H1 (cell line): ENCODE measurements at regions of chr2 and their contacts with region 1.

Region 1: GRCh38 chr2:235595422-235596010 is 101.7 kb downstream of the AGAP1 start:
- DNase-seq: peak; percentile 50 to 85
- H3K4me3 ChIP-seq: no peak overlapping the region
- H3K27ac ChIP-seq: no peak overlapping the region
- H3K4me1 ChIP-seq: peaks cover 0 to 4% (median 0%) of the 10 kb centered on the region in 4 experiments; a peak in 1 of 7 replicates
- H3K27me3 ChIP-seq: no peaks in the 10 kb centered on the region
- CTCF ChIP-seq: peak; percentile 77 to 92 (median 83)
- EP300 ChIP-seq: no peak
- POLR2A ChIP-seq: no peak
- RAD21 ChIP-seq: peak; percentile 82 to 84

Region 2: GRCh38 chr2:235077046-235077445 is 518.5 kb before region 1 on chr2:
- CTCF ChIA-PET with region 1: no interaction called
- POLR2A ChIA-PET with region 1: no interaction called
- DNase-seq: no peak
- H3K4me3 ChIP-seq: no peak overlapping the region
- H3K27ac ChIP-seq: no peak overlapping the region
- H3K4me1 ChIP-seq: peaks cover 0 to 6% (median 2%) of the 10 kb centered on the region in 4 experiments; a peak in 2 of 7 replicates
- H3K27me3 ChIP-seq: no peaks in the 10 kb centered on the region
- CTCF ChIP-seq: no peak
- EP300 ChIP-seq: no peak
- POLR2A ChIP-seq: no peak
- RAD21 ChIP-seq: no peak

Region 3: GRCh38 chr2:235135990-235136561 is 459.4 kb before region 1 on chr2:
- CTCF ChIA-PET with region 1: interaction called, 46 read pairs
- POLR2A ChIA-PET with region 1: no interaction called
- DNase-seq: peak; percentile 34 to 85
- H3K4me3 ChIP-seq: no peak overlapping the region
- H3K27ac ChIP-seq: no peak overlapping the region
- H3K4me1 ChIP-seq: no peaks in the 10 kb centered on the region; a peak in 2 of 7 replicates
- H3K27me3 ChIP-seq: peaks cover 0 to 11% (median 8%) of the 10 kb centered on the region in 4 experiments; a peak in 6 of 7 replicates
- CTCF ChIP-seq: peak; percentile 69 to 91 (median 84)
- EP300 ChIP-seq: no peak
- POLR2A ChIP-seq: no peak
- RAD21 ChIP-seq: peak; percentile 86 to 88

Region 4: DNA sequence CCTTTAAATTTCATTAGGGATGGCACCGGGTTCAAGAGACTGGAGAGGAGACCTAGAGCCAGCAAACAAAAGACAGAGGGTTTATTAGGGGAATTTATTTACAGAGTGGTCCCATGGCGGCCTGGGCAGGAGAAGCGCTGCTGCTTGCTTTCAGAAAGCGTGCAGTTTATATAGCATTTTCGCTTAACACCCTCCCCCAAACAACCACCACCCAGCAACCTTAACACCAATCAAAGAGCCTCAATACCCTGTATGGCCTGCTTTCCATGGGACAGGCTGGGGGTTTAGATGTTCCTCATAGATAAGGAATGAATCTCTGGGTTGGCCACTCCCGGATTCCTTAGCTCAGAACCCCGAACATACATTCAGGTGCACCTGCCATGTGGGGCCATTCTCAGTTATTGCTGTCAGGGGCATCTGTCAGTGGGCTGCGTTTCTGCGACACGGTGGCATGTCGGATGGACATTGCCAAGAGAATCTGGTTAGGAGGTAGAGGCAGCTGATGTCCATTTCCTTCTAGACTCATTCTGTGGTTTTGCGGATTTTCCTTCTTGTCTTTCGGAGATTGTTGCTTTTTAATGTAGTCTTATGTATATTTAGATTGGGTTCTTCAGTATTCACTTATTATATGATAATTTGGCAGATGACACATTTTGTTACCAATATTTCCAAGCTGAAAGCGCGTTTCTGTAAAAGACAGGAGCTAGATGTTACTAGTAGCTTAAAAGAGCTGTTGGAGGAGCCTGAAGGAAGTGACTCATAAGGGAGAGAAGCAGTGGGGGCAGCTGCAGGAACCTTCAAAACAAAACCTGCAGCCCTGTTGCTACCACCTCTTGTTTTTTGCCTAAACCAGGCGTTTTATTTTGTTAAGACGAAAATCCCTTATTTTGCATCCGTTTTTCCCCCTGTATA is 94.5 kb before region 1 on chr2:
- CTCF ChIA-PET with region 1: interaction called, 23 read pairs
- POLR2A ChIA-PET with region 1: no interaction called
- DNase-seq: no peak
- H3K4me3 ChIP-seq: peak overlapping the region in 1 of 4 experiments; percentile 17; a peak in 1 of 8 replicates
- H3K27ac ChIP-seq: no peak overlapping the region
- H3K4me1 ChIP-seq: peaks cover 25 to 51% (median 38%) of the 10 kb centered on the region in 4 experiments
- H3K27me3 ChIP-seq: no peaks in the 10 kb centered on the region
- CTCF ChIP-seq: no peak
- EP300 ChIP-seq: no peak
- POLR2A ChIP-seq: no peak
- RAD21 ChIP-seq: no peak

Region 5: DNA sequence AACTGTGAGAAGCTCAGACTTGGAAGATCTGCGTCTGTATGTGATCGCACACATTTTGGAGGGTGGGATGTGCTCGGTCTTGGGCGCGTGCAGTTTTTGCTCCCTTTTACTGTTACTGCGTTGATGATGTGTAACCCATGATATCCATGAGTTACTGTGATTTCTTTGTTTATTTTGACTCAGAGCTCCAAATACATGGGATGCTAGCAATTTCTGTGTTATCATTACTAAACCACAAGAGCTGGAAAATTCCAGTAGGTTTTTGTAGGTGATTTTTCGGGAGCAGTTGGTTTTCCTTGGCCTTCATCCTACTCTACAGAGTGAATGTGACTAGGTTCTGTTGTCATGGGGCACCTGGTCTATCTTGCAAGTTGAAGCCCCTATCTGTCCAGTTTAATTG is 22.5 kb after region 1 on chr2:
- CTCF ChIA-PET with region 1: interaction called, 10 read pairs
- POLR2A ChIA-PET with region 1: no interaction called
- DNase-seq: no peak
- H3K4me3 ChIP-seq: no peak overlapping the region
- H3K27ac ChIP-seq: no peak overlapping the region
- H3K4me1 ChIP-seq: peaks cover 0 to 4% (median under 1%) of the 10 kb centered on the region in 4 experiments; a peak in 4 of 7 replicates
- H3K27me3 ChIP-seq: no peaks in the 10 kb centered on the region
- CTCF ChIP-seq: no peak
- EP300 ChIP-seq: no peak
- POLR2A ChIP-seq: no peak
- RAD21 ChIP-seq: no peak

Region 6: DNA sequence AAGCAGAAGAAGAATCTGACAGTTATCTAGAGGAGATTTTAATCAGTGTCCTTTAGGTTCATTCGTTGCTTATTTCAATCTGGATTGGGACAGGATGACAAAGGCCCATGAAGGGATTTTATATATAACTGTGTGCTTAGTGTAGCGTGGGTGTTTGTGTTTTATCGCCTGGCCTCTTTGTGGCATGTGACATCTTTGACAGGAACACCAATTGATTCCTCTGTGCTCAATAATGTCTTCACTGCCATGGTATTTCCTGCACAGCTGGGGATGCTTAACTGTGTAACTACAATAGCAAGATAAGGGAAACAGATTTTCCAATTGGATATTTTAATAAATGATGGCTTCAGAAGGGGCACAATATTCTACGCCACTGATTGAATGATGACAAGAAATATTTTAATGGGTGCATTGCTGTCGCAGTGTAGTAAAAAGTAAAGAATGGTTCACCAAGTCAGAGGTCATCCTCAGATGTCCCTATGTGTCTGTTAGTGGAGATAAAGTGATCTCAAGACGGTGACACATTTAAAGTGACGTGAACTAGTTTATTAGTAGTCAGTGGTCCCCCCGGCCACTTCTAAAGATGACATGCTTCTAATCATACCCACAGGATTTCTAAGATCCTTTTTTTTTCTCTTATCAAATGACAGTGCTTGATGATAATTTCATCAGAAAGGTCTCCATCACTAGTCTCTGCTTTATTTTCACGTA is 58.7 kb after region 1 on chr2:
- CTCF ChIA-PET with region 1: interaction called, 11 read pairs
- POLR2A ChIA-PET with region 1: no interaction called
- DNase-seq: no peak
- H3K4me3 ChIP-seq: no peak overlapping the region
- H3K27ac ChIP-seq: no peak overlapping the region
- H3K4me1 ChIP-seq: peaks cover 5 to 15% (median 9%) of the 10 kb centered on the region in 4 experiments
- H3K27me3 ChIP-seq: no peaks in the 10 kb centered on the region
- CTCF ChIP-seq: no peak
- EP300 ChIP-seq: no peak
- POLR2A ChIP-seq: no peak
- RAD21 ChIP-seq: no peak

Region 7: DNA sequence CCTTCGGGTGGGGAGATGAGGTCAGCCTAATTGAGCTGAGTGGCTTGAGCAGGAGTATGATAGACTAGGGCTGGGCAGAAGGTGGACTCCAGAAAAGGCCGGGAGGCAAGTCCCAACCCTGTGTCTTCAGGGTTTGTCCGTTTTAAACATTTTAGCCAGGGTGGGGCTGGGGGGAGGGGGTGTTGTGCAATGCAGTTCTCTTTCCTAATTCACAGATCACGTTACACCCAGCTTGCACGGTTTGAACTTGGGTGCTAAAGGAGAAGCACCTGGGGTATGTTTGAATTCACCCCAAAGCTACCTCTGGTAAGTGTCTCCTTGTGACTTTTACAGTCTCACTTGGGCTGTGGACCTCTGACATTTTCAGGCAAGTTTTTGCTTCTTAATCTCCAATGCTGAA is 131.7 kb after region 1 on chr2:
- CTCF ChIA-PET with region 1: interaction called, 11 read pairs
- POLR2A ChIA-PET with region 1: no interaction called
- DNase-seq: no peak
- H3K4me3 ChIP-seq: no peak overlapping the region
- H3K27ac ChIP-seq: no peak overlapping the region
- H3K4me1 ChIP-seq: peaks cover 0 to 2% (median under 1%) of the 10 kb centered on the region in 4 experiments; a peak in 3 of 7 replicates
- H3K27me3 ChIP-seq: no peaks in the 10 kb centered on the region
- CTCF ChIP-seq: no peak
- EP300 ChIP-seq: no peak
- POLR2A ChIP-seq: no peak
- RAD21 ChIP-seq: no peak

Region 8: DNA sequence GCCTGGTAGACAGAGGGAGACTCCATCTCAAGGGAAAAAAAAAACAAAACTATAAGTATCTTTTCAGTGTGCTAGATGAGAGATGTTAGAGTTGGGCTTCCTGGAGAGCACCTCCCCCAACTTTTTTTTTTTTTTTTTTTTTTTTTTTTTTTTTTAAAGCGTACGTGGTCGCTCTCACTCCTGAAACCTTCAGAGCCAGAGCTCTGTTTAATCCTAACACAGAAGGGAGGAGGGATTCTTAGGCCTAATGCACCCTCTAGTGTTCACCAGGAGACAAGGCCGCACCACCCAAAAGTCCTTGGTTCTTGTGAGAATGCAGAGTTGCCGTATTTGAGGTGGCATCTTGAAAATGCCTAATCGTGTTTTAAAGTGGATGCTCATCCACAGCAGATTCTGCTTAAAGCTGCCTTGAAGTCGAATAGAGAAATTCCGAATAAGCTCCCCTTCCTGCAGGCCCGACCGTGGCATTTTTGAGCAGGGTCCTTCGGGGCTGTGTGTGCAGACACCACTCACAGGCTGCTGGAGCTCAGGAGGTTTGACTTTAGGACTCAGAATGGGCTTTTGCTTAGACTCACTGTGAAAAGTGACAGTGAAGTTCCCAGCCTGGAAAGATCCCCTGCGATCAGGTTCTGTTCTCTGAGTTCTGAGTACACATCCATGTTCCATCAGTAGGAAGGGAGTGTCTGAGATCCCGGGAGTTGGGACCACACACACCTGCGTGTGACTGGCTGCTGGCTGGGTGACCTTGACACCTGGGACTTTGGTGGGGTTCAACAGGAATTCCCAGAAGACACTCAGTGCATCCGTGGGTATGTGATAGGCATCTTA is 151.0 kb after region 1 on chr2:
- CTCF ChIA-PET with region 1: interaction called, 111 read pairs
- POLR2A ChIA-PET with region 1: no interaction called
- DNase-seq: no peak
- H3K4me3 ChIP-seq: no peak overlapping the region
- H3K27ac ChIP-seq: no peak overlapping the region
- H3K4me1 ChIP-seq: peaks cover 5 to 19% (median 9%) of the 10 kb centered on the region in 4 experiments
- H3K27me3 ChIP-seq: no peaks in the 10 kb centered on the region
- CTCF ChIP-seq: peak; percentile 66 to 83 (median 78)
- EP300 ChIP-seq: no peak
- POLR2A ChIP-seq: no peak
- RAD21 ChIP-seq: peak; percentile 89 to 90

Region 9: DNA sequence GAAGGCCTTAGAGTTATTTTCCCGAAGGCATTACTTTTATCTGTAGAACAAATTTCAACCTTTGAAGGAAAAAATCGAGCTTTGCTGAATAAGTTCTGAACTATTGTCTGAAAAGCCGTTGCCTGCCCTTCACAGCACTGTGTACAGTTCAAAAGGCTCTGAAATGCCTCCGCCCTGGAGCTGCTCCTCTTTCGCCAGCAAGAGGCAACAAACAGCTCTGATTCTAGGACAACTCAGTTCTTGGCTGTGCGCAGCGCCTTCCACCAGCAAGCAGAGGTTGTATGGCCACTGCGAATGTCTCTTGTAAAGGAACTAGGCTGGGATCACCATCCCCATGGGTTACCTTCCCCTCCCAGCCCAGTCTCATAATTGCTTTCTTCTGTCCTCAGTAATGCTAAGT is 264.1 kb after region 1 on chr2:
- CTCF ChIA-PET with region 1: no interaction called
- POLR2A ChIA-PET with region 1: no interaction called
- DNase-seq: no peak
- H3K4me3 ChIP-seq: no peak overlapping the region
- H3K27ac ChIP-seq: no peak overlapping the region
- H3K4me1 ChIP-seq: peaks cover 0 to 9% (median 0%) of the 10 kb centered on the region in 4 experiments; a peak in 2 of 7 replicates
- H3K27me3 ChIP-seq: no peaks in the 10 kb centered on the region
- CTCF ChIP-seq: no peak
- EP300 ChIP-seq: no peak
- POLR2A ChIP-seq: no peak
- RAD21 ChIP-seq: no peak

Region 10: GRCh38 chr2:235877275-235877802 is 281.8 kb after region 1 on chr2:
- CTCF ChIA-PET with region 1: no interaction called
- POLR2A ChIA-PET with region 1: no interaction called
- DNase-seq: no peak
- H3K4me3 ChIP-seq: no peak overlapping the region
- H3K27ac ChIP-seq: no peak overlapping the region
- H3K4me1 ChIP-seq: peaks cover 0 to 8% (median 0%) of the 10 kb centered on the region in 4 experiments; a peak in 1 of 7 replicates
- H3K27me3 ChIP-seq: no peaks in the 10 kb centered on the region
- CTCF ChIP-seq: no peak
- EP300 ChIP-seq: no peak
- POLR2A ChIP-seq: no peak
- RAD21 ChIP-seq: no peak

Region 11: DNA sequence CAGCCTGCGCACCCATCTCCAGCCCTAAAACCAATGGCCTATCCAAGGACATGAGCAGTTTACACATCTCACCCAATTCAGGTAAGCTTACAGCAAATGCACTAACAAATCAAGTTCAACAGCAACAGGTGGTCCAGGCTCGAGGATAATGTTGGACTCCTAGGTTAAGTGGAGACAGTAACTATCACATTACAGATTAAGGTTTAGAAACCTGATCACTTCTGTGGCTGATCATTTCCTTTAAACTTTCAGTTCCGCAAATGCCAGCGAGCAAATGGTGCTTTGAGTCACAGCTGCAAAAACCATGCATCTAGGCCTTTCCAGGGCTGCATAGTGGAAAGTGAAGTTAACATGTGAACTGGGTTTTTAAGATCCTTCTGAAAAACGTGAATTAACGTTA is 313.3 kb after region 1 on chr2:
- CTCF ChIA-PET with region 1: no interaction called
- POLR2A ChIA-PET with region 1: no interaction called
- DNase-seq: no peak
- H3K4me3 ChIP-seq: no peak overlapping the region
- H3K27ac ChIP-seq: no peak overlapping the region
- H3K4me1 ChIP-seq: peaks cover under 1 to 7% (median 2%) of the 10 kb centered on the region in 4 experiments; a peak in 5 of 7 replicates
- H3K27me3 ChIP-seq: no peaks in the 10 kb centered on the region; a peak in 1 of 7 replicates
- CTCF ChIP-seq: no peak
- EP300 ChIP-seq: no peak
- POLR2A ChIP-seq: no peak
- RAD21 ChIP-seq: no peak